HCT116 (cell line): ENCODE measurements at regions of chr1 and their contacts with region 1.

Region 1: DNA sequence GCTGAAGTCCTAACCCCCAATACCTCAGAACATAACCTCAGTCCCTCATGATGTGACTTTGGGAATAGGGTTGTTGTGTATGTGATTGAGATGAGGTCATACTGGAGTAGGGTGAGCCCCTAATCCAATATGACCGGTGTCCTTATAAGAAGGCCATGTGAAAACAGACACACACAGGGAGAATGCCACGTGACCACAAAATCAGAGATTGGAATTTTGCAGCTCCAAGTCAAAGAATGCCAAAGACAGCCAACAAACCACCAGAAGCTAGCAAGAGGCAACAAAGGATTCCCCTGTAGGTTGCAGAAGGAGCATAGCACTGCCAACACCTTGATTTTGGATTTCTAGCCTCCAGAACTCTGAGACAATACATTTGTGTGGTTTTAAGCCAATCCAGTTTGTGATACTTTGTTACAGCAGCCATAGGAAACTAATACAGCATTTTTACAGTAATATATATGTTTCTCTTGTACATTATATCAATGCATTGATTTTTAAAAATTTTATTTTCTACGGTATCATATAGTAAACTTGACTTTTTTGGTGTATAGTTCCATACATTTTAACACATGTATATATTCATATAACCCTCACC is 5.4 kb downstream of the ZSWIM5 start:
- DNase-seq: no peak
- ATAC-seq: no peak
- H3K4me3 ChIP-seq: no peak overlapping the region
- H3K27ac ChIP-seq: no peak overlapping the region
- H3K4me1 ChIP-seq: peaks cover 0 to 5% of the 10 kb centered on the region in 2 experiments; a peak in 1 of 4 replicates
- H3K27me3 ChIP-seq: no peaks in the 10 kb centered on the region
- CTCF ChIP-seq: no peak
- POLR2A ChIP-seq: no peak
- RAD21 ChIP-seq: no peak

Region 2: GRCh38 chr1:45026446-45026845 is 174.6 kb before region 1 on chr1:
- CTCF ChIA-PET with region 1: no interaction called
- POLR2A ChIA-PET with region 1: no interaction called
- RAD21 ChIA-PET with region 1: no interaction called
- intact Hi-C with region 1: no loop called
- DNase-seq: no peak
- ATAC-seq: no peak
- H3K4me3 ChIP-seq: no peak overlapping the region
- H3K27ac ChIP-seq: no peak overlapping the region
- H3K4me1 ChIP-seq: no peaks in the 10 kb centered on the region
- H3K27me3 ChIP-seq: no peaks in the 10 kb centered on the region
- CTCF ChIP-seq: no peak
- POLR2A ChIP-seq: no peak
- RAD21 ChIP-seq: no peak

Region 3: DNA sequence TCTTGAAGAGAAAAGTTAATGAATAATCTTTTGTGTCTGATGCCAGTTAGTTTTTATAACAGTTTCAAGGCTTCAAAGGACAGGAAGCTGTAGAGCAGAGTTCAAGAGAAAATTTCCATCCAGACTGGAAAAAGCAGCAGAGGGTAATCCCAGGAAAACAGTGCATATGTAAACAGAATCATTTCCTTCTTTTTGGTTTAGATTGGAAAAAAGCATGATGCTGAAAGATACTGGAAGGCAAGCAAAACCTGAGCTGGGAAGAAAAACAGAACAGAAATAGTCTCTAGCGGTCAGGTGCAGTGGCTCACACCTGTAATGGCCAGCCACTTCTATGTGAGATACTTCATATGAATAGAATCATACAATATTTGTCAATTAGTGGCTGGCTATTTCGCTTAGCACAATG is 66.5 kb before region 1 on chr1:
- CTCF ChIA-PET with region 1: no interaction called
- POLR2A ChIA-PET with region 1: no interaction called
- RAD21 ChIA-PET with region 1: no interaction called
- intact Hi-C with region 1: no loop called
- DNase-seq: no peak
- ATAC-seq: no peak
- H3K4me3 ChIP-seq: no peak overlapping the region
- H3K27ac ChIP-seq: no peak overlapping the region
- H3K4me1 ChIP-seq: no peaks in the 10 kb centered on the region
- H3K27me3 ChIP-seq: no peaks in the 10 kb centered on the region
- CTCF ChIP-seq: no peak
- POLR2A ChIP-seq: no peak
- RAD21 ChIP-seq: no peak

Region 4: GRCh38 chr1:45155423-45155822 is 45.6 kb before region 1 on chr1:
- CTCF ChIA-PET with region 1: no interaction called
- POLR2A ChIA-PET with region 1: no interaction called
- RAD21 ChIA-PET with region 1: no interaction called
- intact Hi-C with region 1: loop called (anchors 5 kb)
- DNase-seq: no peak
- ATAC-seq: no peak
- H3K4me3 ChIP-seq: no peak overlapping the region
- H3K27ac ChIP-seq: no peak overlapping the region
- H3K4me1 ChIP-seq: no peaks in the 10 kb centered on the region
- H3K27me3 ChIP-seq: no peaks in the 10 kb centered on the region
- CTCF ChIP-seq: no peak
- POLR2A ChIP-seq: no peak
- RAD21 ChIP-seq: no peak

Region 5: GRCh38 chr1:45326627-45327623 is 125.9 kb after region 1 on chr1 and contains the start of gene HPDL:
- CTCF ChIA-PET with region 1: no interaction called
- POLR2A ChIA-PET with region 1: no interaction called
- RAD21 ChIA-PET with region 1: no interaction called
- intact Hi-C with region 1: no loop called
- DNase-seq: no peak
- ATAC-seq: 0 out of 2 replicates have a peak, but pooled peaks have one; percentile 18
- H3K4me3 ChIP-seq: no peak within 1 kb of the TSS
- H3K27ac ChIP-seq: no peak within 1 kb of the TSS
- H3K4me1 ChIP-seq: peaks cover 0 to 7% of the 10 kb centered on the region in 2 experiments; a peak in 2 of 4 replicates
- H3K27me3 ChIP-seq: no peaks in the 10 kb centered on the region
- CTCF ChIP-seq: no peak
- POLR2A ChIP-seq: no peak
- RAD21 ChIP-seq: no peak
- total RNA-seq, gene HPDL: not detected

Region 6: DNA sequence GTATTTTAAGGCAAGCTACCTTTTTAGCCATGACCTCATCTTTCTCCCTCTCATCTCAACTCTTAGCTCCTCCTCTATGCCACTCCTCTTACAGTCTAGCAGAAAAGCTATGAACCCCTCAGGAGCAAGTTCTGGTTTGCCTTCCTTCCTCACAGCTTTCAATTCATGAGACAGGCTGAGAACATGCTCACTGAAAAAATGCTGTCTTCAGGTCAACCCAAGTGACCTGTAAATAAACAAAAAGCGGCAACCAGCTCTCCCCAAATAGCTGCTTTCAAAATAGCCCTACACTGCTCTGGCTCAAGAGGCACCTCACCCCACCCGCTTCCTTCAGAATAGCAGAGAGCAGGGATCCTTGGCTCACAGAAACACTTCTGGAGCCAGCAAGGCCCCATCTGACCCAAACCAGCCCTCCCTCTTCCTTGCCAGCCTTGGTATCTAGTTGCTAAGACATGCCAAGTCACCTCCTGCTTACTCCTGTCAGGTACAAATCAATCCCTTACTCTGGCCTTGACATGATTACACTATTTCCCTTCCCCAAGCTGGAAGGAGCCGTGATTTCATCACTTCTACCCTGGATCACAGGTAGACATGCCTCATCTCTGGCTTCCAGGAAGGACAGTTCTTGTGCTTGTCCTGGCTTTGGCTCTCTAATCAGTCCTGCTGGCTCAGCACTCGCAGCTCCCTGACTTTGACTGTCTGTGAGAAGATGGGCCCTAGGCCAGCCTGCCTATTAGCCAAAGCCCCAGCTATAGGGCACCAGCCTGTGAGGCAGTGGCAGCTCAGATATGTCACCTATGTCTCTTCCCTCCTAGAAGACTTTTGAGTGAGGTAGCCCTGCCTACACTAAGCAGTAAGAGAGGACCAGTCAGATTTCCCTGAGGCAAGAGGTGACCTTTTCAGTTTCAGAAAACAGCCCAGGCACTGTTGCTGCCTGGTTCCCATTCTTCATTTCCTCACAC is 148.0 kb after region 1 on chr1:
- CTCF ChIA-PET with region 1: no interaction called
- POLR2A ChIA-PET with region 1: no interaction called
- RAD21 ChIA-PET with region 1: no interaction called
- intact Hi-C with region 1: no loop called
- DNase-seq: no peak
- ATAC-seq: 0 out of 2 replicates have a peak, but pooled peaks have one; percentile 5
- H3K4me3 ChIP-seq: no peak overlapping the region
- H3K27ac ChIP-seq: no peak overlapping the region
- H3K4me1 ChIP-seq: peaks cover 16 to 34% of the 10 kb centered on the region in 2 experiments
- H3K27me3 ChIP-seq: no peaks in the 10 kb centered on the region
- CTCF ChIP-seq: no peak
- POLR2A ChIP-seq: no peak
- RAD21 ChIP-seq: no peak